ENCODE measurements at regions of chr1 and their contacts with region 1.

Region 1: GRCh38 chr1:156560585-156561183 is 11.7 kb downstream of the IQGAP3 start:
- DNase-seq: no peak
- H3K4me3 ChIP-seq: no peak overlapping the region
- H3K27ac ChIP-seq: no peak overlapping the region
- H3K4me1 ChIP-seq: no peaks in the 10 kb centered on the region
- H3K27me3 ChIP-seq: no peaks in the 10 kb centered on the region
- CTCF ChIP-seq: no peak
- POLR2A ChIP-seq: no peak

Region 2: DNA sequence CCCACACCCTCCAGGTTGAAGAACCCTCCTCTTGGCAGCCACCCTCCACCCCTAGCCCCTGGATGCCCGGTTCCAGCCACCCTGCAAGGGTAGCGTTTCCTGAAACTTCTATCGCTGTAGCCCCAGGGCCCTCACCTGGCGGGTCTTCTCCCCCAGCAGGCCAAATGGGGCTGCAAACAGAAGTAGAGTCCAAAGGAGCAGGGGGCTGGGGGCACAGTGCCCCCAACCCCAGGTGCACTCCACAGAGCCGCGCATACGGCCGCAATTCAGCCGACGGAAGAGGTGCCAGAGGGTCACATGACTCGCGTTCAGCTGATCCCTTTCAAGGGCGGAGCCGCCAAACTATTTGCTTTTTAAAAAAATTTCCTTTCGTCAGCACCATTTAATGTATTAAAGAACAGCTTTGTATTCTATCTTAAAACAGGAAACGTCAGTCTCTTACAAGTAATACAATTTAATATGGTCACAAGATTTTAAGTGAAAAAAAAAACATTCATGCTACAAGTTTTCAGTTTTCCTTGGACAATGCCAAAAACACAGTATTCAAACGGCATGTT is 265.2 kb before region 1 on chr1 and contains the start of gene GLMP:
- CTCF ChIA-PET with region 1: no interaction called
- POLR2A ChIA-PET with region 1: no interaction called
- dilution Hi-C with region 1: no loop called
- intact Hi-C with region 1: no loop called
- DNase-seq: peak; percentile 66
- H3K4me3 ChIP-seq: peak within 1 kb of the TSS; percentile 41 to 82 (median 66)
- H3K27ac ChIP-seq: peak within 1 kb of the TSS; percentile 3
- H3K4me1 ChIP-seq: peaks cover 10% of the 10 kb centered on the region
- H3K27me3 ChIP-seq: no peaks in the 10 kb centered on the region
- CTCF ChIP-seq: no peak
- POLR2A ChIP-seq: peak; percentile 79
- total RNA-seq, gene GLMP: 83.3 and 84.3 TPM in 2 replicates

Region 3: GRCh38 chr1:157639800-157640199 is 1079.1 kb after region 1 on chr1:
- CTCF ChIA-PET with region 1: no interaction called
- POLR2A ChIA-PET with region 1: no interaction called
- dilution Hi-C with region 1: no loop called
- intact Hi-C with region 1: loop called (anchors 10 kb)
- DNase-seq: no peak
- H3K4me3 ChIP-seq: no peak overlapping the region
- H3K27ac ChIP-seq: no peak overlapping the region
- H3K4me1 ChIP-seq: no peaks in the 10 kb centered on the region
- H3K27me3 ChIP-seq: no peaks in the 10 kb centered on the region
- CTCF ChIP-seq: no peak
- POLR2A ChIP-seq: no peak

Measured in endothelial cell of umbilical vein (primary cell).